ENCODE measurements at regions of chr12 and their contacts with region 1.

Region 1: DNA sequence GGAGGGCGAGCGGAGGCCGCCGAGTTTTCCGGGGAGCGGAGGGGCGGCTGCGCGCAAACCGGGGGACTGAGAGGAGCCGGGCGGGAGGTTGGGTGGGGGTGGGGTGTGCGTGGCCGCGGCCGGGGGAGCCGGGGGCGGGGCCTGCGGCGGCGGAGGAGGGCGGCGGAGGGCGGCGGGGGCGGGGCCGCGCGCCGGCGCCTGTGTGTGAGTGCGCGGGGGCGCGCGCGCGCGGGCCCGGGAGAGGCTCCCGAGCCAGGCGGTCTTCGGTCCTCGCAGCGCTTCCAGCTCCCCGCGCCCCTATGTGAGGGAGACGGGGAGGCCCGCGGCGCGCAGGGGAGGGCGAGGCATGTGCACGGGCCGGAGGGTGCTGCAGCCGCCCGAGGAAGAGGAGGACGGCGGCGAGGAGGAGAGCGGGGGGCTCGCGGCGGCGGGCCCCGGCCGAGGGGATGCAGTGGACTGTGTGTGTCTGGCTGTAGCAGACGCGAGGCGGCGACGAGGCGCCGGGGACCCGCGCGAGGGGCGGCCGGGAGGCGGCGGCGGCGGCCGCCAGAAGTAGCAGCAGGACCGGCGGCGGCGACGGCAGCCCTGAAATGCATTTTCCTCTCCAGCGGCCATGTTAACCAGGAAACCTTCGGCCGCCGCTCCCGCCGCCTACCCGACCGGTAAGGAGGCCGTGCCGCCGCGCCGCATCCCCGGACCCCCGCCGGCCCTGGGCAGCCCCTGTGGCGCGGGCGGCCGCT is at the start of gene DYRK2:
- DNase-seq: peak; percentile 65 to 83 (median 78)
- ATAC-seq: peak; percentile 81
- H3K4me3 ChIP-seq: peak within 1 kb of the TSS; percentile 93
- H3K4me3 Mint-ChIP-seq: peak within 1 kb of the TSS; percentile 93 to 100 (median 98)
- H3K27ac ChIP-seq: peak within 1 kb of the TSS; percentile 90
- H3K27ac Mint-ChIP-seq: peak within 1 kb of the TSS; percentile 89 to 100 (median 98)
- H3K4me1 ChIP-seq: peaks cover 22 to 23% of the 10 kb centered on the region in 2 donors
- H3K4me1 Mint-ChIP-seq: peaks cover 38 to 48% (median 42%) of the 10 kb centered on the region in 7 donors
- H3K27me3 ChIP-seq: no peaks in the 10 kb centered on the region
- H3K27me3 Mint-ChIP-seq: peaks cover 0 to 13% (median 0%) of the 10 kb centered on the region in 5 donors
- total RNA-seq, gene DYRK2: 55.3 to 157 (median 119) TPM

Region 2: GRCh38 chr12:67441736-67442346 is 206.8 kb before region 1 on chr12:
- CTCF ChIA-PET with region 1: interaction called, 3 read pairs
- POLR2A ChIA-PET with region 1: interaction called, 5 read pairs
- intact Hi-C with region 1: loop called (anchors 1 to 5 kb)
- DNase-seq: peak; percentile 50 to 76 (median 72)
- ATAC-seq: peak; percentile 94
- H3K4me3 ChIP-seq: no peak overlapping the region
- H3K4me3 Mint-ChIP-seq: peak overlapping the region in 9 of 10 donors; percentile 29 to 78 (median 59)
- H3K27ac ChIP-seq: no peak overlapping the region
- H3K27ac Mint-ChIP-seq: peak overlapping the region in 8 of 9 donors; percentile 17 to 93 (median 53)
- H3K4me1 ChIP-seq: peaks cover 5 to 7% of the 10 kb centered on the region in 2 donors
- H3K4me1 Mint-ChIP-seq: peaks cover 8 to 38% (median 34%) of the 10 kb centered on the region in 7 donors
- H3K27me3 ChIP-seq: no peaks in the 10 kb centered on the region
- H3K27me3 Mint-ChIP-seq: peaks cover 0 to 8% (median 0%) of the 10 kb centered on the region in 5 donors

Region 3: GRCh38 chr12:67578976-67579661 is 69.6 kb before region 1 on chr12:
- CTCF ChIA-PET with region 1: interaction called, 11 read pairs
- POLR2A ChIA-PET with region 1: interaction called, 9 read pairs
- intact Hi-C with region 1: loop called (anchors 1 kb)
- DNase-seq: peak in 7 of 9 donors; percentile 52 to 80 (median 72)
- ATAC-seq: peak; percentile 80
- H3K4me3 ChIP-seq: peak overlapping the region; percentile 47
- H3K4me3 Mint-ChIP-seq: peak overlapping the region; percentile 56 to 87 (median 76)
- H3K27ac ChIP-seq: no peak overlapping the region
- H3K27ac Mint-ChIP-seq: peak overlapping the region; percentile 3 to 90 (median 61)
- H3K4me1 ChIP-seq: peaks cover 35 to 50% of the 10 kb centered on the region in 2 donors
- H3K4me1 Mint-ChIP-seq: peaks cover 32 to 69% (median 63%) of the 10 kb centered on the region in 7 donors
- H3K27me3 ChIP-seq: no peaks in the 10 kb centered on the region
- H3K27me3 Mint-ChIP-seq: peaks cover 0 to 33% (median 0%) of the 10 kb centered on the region in 5 donors

Region 4: GRCh38 chr12:67661311-67662021 is 12.8 kb after region 1 on chr12:
- CTCF ChIA-PET with region 1: interaction called, 4 read pairs
- POLR2A ChIA-PET with region 1: interaction called, 7 read pairs
- intact Hi-C with region 1: loop called in 1 of 2 experiments (anchors 2 kb)
- DNase-seq: no peak
- ATAC-seq: no peak
- H3K4me3 ChIP-seq: no peak overlapping the region
- H3K4me3 Mint-ChIP-seq: peak overlapping the region in 6 of 10 donors; percentile 20 to 67 (median 52)
- H3K27ac ChIP-seq: no peak overlapping the region
- H3K27ac Mint-ChIP-seq: peak overlapping the region in 7 of 9 donors; percentile 20 to 71 (median 63)
- H3K4me1 ChIP-seq: peaks cover 38 to 69% of the 10 kb centered on the region in 2 donors
- H3K4me1 Mint-ChIP-seq: peaks cover 44 to 98% (median 93%) of the 10 kb centered on the region in 7 donors
- H3K27me3 ChIP-seq: no peaks in the 10 kb centered on the region
- H3K27me3 Mint-ChIP-seq: no peaks in the 10 kb centered on the region

Region 5: GRCh38 chr12:67720351-67720856 is 71.7 kb after region 1 on chr12:
- CTCF ChIA-PET with region 1: no interaction called
- POLR2A ChIA-PET with region 1: no interaction called
- intact Hi-C with region 1: no loop called
- DNase-seq: no peak
- ATAC-seq: no peak
- H3K4me3 ChIP-seq: no peak overlapping the region
- H3K4me3 Mint-ChIP-seq: no peak overlapping the region
- H3K27ac ChIP-seq: no peak overlapping the region
- H3K27ac Mint-ChIP-seq: no peak overlapping the region
- H3K4me1 ChIP-seq: no peaks in the 10 kb centered on the region
- H3K4me1 Mint-ChIP-seq: peaks cover 0 to 4% (median 0%) of the 10 kb centered on the region in 7 donors
- H3K27me3 ChIP-seq: no peaks in the 10 kb centered on the region
- H3K27me3 Mint-ChIP-seq: peaks cover 0 to 4% (median 0%) of the 10 kb centered on the region in 5 donors

Region 6: DNA sequence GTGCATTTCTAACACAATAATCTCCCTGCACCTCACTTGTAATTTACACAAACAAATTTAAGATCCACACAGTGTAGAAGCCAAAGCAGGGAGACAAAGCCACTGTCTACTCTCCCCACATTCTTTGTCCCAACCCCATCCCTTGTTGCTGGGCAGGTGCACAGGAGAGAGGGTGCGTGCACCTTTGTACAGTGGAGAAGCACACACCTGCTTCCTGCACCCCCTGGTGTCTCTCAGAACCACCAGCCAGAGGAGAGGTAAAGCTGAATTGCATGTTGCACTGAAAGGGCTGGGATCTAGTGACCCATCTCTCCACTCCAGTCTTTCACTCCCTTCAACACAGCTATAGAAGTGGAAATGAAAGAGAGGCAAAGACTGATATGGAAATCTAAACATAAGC is 289.1 kb after region 1 on chr12:
- CTCF ChIA-PET with region 1: interaction called, 12 read pairs
- POLR2A ChIA-PET with region 1: interaction called, 6 read pairs
- intact Hi-C with region 1: loop called (anchors 1 kb)
- DNase-seq: peak in 3 of 9 donors; percentile 6 to 16 (median 12)
- ATAC-seq: no peak
- H3K4me3 ChIP-seq: no peak overlapping the region
- H3K4me3 Mint-ChIP-seq: no peak overlapping the region
- H3K27ac ChIP-seq: no peak overlapping the region
- H3K27ac Mint-ChIP-seq: peak overlapping the region in 1 of 9 donors; percentile 46
- H3K4me1 ChIP-seq: no peaks in the 10 kb centered on the region
- H3K4me1 Mint-ChIP-seq: peaks cover 0 to 7% (median 0%) of the 10 kb centered on the region in 7 donors
- H3K27me3 ChIP-seq: no peaks in the 10 kb centered on the region
- H3K27me3 Mint-ChIP-seq: peaks cover 0 to 16% (median 0%) of the 10 kb centered on the region in 5 donors